ENCODE measurements at regions of chr12 and their contacts with region 1.

Region 1: GRCh38 chr12:3964439-3964838 is 91.2 kb upstream of the PARP11 start:
- DNase-seq: peak; percentile 58 to 61
- H3K4me3 ChIP-seq: no peak overlapping the region
- H3K4me3 Mint-ChIP-seq: no peak overlapping the region
- H3K27ac Mint-ChIP-seq: no peak overlapping the region
- H3K4me1 ChIP-seq: peaks cover 64% of the 10 kb centered on the region
- H3K4me1 Mint-ChIP-seq: peaks cover 61% of the 10 kb centered on the region
- H3K27me3 ChIP-seq: no peaks in the 10 kb centered on the region
- H3K27me3 Mint-ChIP-seq: no peaks in the 10 kb centered on the region
- CTCF ChIP-seq: peak; percentile 51 to 74

Region 2: GRCh38 chr12:3920351-3921150 is 43.9 kb before region 1 on chr12:
- CTCF ChIA-PET with region 1: no interaction called
- POLR2A ChIA-PET with region 1: no interaction called
- intact Hi-C with region 1: loop called (anchors 2 kb)
- DNase-seq: peak; percentile 65 to 86
- H3K4me3 ChIP-seq: peak overlapping the region; percentile 23
- H3K4me3 Mint-ChIP-seq: no peak overlapping the region
- H3K27ac Mint-ChIP-seq: no peak overlapping the region
- H3K4me1 ChIP-seq: peaks cover 35% of the 10 kb centered on the region
- H3K4me1 Mint-ChIP-seq: peaks cover 12% of the 10 kb centered on the region
- H3K27me3 ChIP-seq: no peaks in the 10 kb centered on the region
- H3K27me3 Mint-ChIP-seq: peaks cover 5% of the 10 kb centered on the region
- CTCF ChIP-seq: no peak

Region 3: GRCh38 chr12:4011597-4011996 is 47.2 kb after region 1 on chr12:
- CTCF ChIA-PET with region 1: no interaction called
- POLR2A ChIA-PET with region 1: interaction called, 3 read pairs
- intact Hi-C with region 1: loop called (anchors 1 kb)
- DNase-seq: peak; percentile 86 to 91
- H3K4me3 ChIP-seq: no peak overlapping the region
- H3K4me3 Mint-ChIP-seq: peak overlapping the region; percentile 12
- H3K27ac Mint-ChIP-seq: peak overlapping the region; percentile 35
- H3K4me1 ChIP-seq: peaks cover 68% of the 10 kb centered on the region
- H3K4me1 Mint-ChIP-seq: peaks cover 57% of the 10 kb centered on the region
- H3K27me3 ChIP-seq: no peaks in the 10 kb centered on the region
- H3K27me3 Mint-ChIP-seq: no peaks in the 10 kb centered on the region
- CTCF ChIP-seq: no peak

Region 4: DNA sequence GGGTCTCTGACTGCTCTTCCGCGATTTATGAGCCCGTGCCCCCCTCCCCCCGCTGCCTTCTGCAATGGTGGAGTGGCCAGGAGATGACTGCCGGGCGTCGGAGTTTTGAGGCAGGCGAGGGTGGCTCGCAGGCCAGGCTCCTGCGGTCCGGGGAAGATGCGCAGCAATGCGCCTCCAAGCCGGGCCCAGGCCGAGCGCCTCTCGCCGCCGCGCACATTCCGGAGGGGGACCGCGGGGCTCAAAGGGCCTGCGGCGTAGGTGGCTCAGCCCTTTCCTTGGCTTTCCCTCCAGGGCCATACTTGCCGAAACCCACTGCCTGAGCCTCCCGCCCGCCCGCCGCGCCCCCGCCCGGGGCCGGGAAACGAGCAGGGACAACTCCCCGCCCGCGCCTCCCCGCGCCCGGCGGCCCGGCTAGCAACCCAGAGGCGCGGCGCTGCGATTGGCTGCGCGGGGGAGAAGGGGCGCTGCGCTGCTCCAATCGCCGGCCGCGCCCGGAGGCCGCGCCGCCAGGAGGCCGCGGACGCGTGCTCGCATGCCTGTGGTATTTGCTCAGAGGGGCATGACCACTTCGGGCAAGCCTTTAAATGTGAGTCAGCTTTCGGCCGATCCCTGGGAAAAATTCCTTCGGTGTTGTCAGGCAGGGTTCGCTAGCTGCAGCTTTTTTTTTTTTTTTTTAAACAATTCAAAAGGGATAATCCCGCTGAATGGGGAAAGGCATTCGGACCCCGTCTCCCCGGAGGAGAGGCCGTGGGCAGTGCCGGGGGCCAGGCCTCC is 66.7 kb after region 1 on chr12:
- CTCF ChIA-PET with region 1: interaction called, 3 read pairs
- POLR2A ChIA-PET with region 1: interaction called, 6 read pairs
- intact Hi-C with region 1: loop called (anchors 1 kb)
- DNase-seq: peak; percentile 99
- H3K4me3 ChIP-seq: peak overlapping the region; percentile 44
- H3K4me3 Mint-ChIP-seq: peak overlapping the region; percentile 67
- H3K27ac Mint-ChIP-seq: peak overlapping the region; percentile 96
- H3K4me1 ChIP-seq: peaks cover 49% of the 10 kb centered on the region
- H3K4me1 Mint-ChIP-seq: peaks cover 57% of the 10 kb centered on the region
- H3K27me3 ChIP-seq: no peaks in the 10 kb centered on the region
- H3K27me3 Mint-ChIP-seq: no peaks in the 10 kb centered on the region
- CTCF ChIP-seq: no peak

Region 5: DNA sequence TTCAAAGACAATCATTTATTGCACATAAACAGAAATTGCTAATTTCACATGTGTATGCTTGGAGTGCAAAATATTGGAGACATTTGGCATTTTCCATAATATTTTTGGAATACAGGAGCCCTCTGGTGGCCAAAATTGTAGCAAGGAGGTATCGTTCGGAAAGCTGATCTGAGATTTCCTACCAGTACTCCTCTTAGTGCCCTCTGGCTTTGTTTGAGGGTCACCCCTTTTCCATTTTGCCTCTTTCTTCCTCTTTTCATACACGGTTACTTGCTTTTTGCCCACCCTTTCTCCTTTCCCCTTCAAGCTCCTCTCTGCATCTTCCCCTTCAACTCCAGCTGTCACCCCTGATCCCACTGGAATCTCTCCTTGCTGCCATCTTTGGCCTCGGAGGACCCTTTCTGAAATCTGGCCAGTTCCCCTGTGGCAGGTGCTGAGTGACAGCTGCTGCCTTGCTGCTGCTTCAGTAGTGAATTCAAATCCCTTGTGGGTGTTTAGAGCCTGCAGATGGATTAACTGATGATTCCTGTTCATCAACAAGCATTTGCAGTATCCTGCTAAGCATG is 73.4 kb after region 1 on chr12:
- CTCF ChIA-PET with region 1: interaction called, 17 read pairs
- POLR2A ChIA-PET with region 1: no interaction called
- intact Hi-C with region 1: no loop called
- DNase-seq: peak; percentile 54 to 82
- H3K4me3 ChIP-seq: no peak overlapping the region
- H3K4me3 Mint-ChIP-seq: no peak overlapping the region
- H3K27ac Mint-ChIP-seq: no peak overlapping the region
- H3K4me1 ChIP-seq: peaks cover 36% of the 10 kb centered on the region
- H3K4me1 Mint-ChIP-seq: peaks cover 38% of the 10 kb centered on the region
- H3K27me3 ChIP-seq: no peaks in the 10 kb centered on the region
- H3K27me3 Mint-ChIP-seq: no peaks in the 10 kb centered on the region
- CTCF ChIP-seq: peak; percentile 89 to 95

Measured in Caco-2 (cell line).